ENCODE measurements at regions of chr14 and their contacts with region 1.

Region 1: DNA sequence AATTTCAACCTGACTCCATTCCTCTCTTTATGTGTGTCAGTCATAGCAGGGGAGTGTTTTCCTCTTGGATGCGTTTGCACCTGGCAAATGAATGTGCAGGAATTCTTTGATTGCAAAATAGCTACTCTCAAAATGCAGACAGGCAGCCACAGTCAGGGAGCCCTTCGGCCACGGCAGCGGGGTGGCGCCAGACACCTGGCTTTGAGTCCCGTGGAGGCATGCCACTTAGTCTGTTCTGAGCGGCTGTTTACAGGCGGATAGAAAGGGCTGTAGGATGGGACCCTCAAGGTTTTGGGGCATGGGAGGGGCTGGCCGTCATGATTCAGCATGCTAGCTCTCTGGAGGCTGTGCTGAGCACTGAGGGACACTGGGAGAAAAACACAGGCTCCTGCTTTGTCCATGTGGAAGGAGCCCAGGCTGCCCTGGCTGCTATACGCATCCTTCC is 117.1 kb downstream of the SLC25A47 start:
- H3K4me3 ChIP-seq: no peak overlapping the region
- H3K27ac ChIP-seq: no peak overlapping the region
- H3K4me1 ChIP-seq: peaks cover 7% of the 10 kb centered on the region; the same call in 1 of the 2 replicates
- CTCF ChIP-seq: peak; percentile 79

Region 2: DNA sequence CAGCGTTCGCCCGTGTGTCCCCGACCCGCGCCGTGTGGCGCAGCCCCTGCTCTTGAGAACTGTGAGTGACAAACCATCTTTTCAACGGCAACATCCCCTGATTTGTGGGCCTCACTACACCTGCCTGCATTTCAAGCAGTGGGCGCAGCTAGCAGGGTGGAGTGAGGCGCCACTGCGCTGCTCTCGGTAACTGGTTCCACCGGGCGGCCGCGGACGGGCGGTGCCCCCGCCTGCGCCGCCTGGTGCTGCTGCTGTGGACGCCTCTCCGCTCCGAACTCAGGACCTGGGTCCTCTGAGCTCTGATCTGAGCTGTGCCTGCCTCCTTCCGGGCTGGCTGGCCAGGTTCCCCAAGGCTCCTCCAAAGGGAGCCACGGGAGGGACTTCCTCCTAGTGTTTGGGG is 274.8 kb before region 1 on chr14:
- CTCF ChIA-PET with region 1: no interaction called
- POLR2A ChIA-PET with region 1: no interaction called
- H3K4me3 ChIP-seq: no peak overlapping the region
- H3K27ac ChIP-seq: no peak overlapping the region
- H3K4me1 ChIP-seq: no peaks in the 10 kb centered on the region
- CTCF ChIP-seq: no peak

Region 3: DNA sequence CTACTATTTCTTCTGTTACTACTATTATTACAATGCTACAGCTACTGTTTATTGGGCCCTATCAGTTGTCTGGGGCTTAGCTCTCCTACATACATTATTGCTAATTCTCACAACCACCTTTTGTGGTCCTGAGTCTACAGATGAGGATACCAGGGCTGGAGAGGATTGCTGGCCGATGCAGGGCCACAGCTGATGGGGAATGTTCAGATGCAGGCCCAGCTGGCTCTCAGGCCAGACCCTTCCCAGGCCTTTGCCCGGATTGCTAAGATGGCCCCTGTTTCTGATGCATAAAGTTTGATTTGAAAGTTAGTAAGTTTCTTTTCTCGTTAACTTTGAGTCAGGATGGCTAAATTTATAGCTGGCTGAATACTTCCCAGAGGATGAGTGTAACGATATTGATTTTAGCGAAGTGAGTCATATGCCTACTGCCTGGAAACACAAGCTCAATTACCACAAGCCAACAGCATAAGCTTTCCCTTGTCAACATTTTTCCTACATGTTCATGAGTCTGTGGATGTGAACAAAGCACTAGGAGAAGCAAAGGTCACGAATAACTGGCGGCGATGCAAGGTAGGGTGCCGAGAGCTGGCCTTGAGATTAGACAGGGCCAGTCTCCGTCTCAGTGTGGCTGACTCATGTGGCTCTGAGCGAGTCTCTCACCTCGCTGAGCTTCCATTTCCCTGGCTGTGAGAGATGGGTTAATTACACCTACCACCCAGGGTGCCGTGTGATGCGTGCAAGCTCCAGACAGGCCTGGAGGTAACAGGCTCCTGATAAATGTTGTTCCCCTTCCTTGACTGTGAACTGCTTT is 36.0 kb after region 1 on chr14:
- CTCF ChIA-PET with region 1: interaction called, 12 read pairs
- POLR2A ChIA-PET with region 1: interaction called, 9 read pairs
- H3K4me3 ChIP-seq: no peak overlapping the region
- H3K27ac ChIP-seq: peak overlapping the region; percentile 68
- H3K4me1 ChIP-seq: peaks cover 24% of the 10 kb centered on the region
- CTCF ChIP-seq: no peak

Region 4: GRCh38 chr14:100654814-100655740 is 214.9 kb after region 1 on chr14:
- CTCF ChIA-PET with region 1: interaction called, 12 read pairs
- POLR2A ChIA-PET with region 1: no interaction called
- H3K4me3 ChIP-seq: no peak overlapping the region; the same call in 1 of the 2 replicates
- H3K27ac ChIP-seq: no peak overlapping the region
- H3K4me1 ChIP-seq: no peaks in the 10 kb centered on the region
- CTCF ChIP-seq: no peak